ENCODE measurements at regions of chr7 and their contacts with region 1.

Region 1: GRCh38 chr7:25389489-25390106 is 161.3 kb upstream of the NPVF start:
- DNase-seq: no peak
- ATAC-seq: peak; percentile 74
- H3K4me3 ChIP-seq: no peak overlapping the region
- H3K27ac ChIP-seq: no peak overlapping the region
- H3K4me1 ChIP-seq: no peaks in the 10 kb centered on the region
- H3K27me3 ChIP-seq: peaks cover 8% of the 10 kb centered on the region
- CTCF ChIP-seq: peak; percentile 76

Region 2: GRCh38 chr7:25259587-25260243 is 129.9 kb before region 1 on chr7:
- CTCF ChIA-PET with region 1: interaction called, 4 read pairs
- POLR2A ChIA-PET with region 1: no interaction called
- in situ Hi-C with region 1: no loop called
- intact Hi-C with region 1: loop called (anchors 1 kb)
- DNase-seq: peak; percentile 46
- ATAC-seq: peak; percentile 94
- H3K4me3 ChIP-seq: no peak overlapping the region
- H3K27ac ChIP-seq: no peak overlapping the region
- H3K4me1 ChIP-seq: no peaks in the 10 kb centered on the region
- H3K27me3 ChIP-seq: peaks cover 9% of the 10 kb centered on the region
- CTCF ChIP-seq: peak; percentile 91

Region 3: DNA sequence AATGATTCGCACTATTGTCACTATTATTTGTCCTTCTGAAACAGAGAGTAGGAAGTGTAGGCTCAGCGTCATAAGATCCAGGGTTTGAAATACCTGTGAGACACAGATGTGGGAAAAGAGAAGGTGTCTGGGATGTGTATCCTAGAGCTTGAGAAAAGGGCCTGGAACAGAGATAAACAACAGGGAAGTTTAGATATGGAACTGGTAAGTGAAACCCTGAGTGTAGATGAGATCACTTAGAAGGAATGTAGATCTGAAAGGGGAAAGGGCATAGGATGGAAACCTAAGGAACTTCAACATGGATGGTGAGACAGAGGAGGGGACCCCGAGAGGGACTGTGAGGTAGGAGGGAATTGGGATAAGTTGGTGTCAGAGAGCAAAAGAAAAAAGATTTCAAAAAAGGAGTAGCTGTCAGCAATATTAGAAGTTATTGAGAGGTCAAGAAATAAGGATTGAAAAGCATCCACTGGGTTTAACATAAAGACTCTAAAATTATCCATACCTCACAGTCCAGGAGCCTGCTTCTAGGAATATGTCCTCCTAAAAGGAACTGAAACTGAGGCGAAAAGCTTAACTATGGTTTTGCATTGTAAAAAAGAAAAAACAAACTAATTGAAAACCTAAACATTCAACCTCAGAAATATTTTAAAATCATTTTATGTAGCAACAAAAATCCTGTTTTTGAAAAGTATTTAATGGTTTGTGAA is 42.1 kb before region 1 on chr7:
- CTCF ChIA-PET with region 1: no interaction called
- POLR2A ChIA-PET with region 1: no interaction called
- in situ Hi-C with region 1: no loop called
- intact Hi-C with region 1: no loop called
- DNase-seq: no peak
- ATAC-seq: no peak
- H3K4me3 ChIP-seq: no peak overlapping the region
- H3K27ac ChIP-seq: no peak overlapping the region
- H3K4me1 ChIP-seq: no peaks in the 10 kb centered on the region
- H3K27me3 ChIP-seq: peaks cover 3% of the 10 kb centered on the region; the same call in 1 of the 2 replicates
- CTCF ChIP-seq: no peak

Measured in Panc1 (cell line).